Naive thymus-derived CD8-positive, alpha-beta T cell (primary cell): ENCODE measurements at regions of chr15 and their contacts with region 1.

Region 1: GRCh38 chr15:41544650-41545015 is 576 bp upstream of the RPAP1 start:
- DNase-seq: peak in 6 of 10 donors; percentile 23 to 69 (median 48)
- ATAC-seq: peak; percentile 18 to 44
- H3K4me3 Mint-ChIP-seq: peak overlapping the region; percentile 91 to 97 (median 95)
- H3K27ac Mint-ChIP-seq: peak overlapping the region; percentile 89 to 98 (median 95)
- H3K4me1 Mint-ChIP-seq: peaks cover 9 to 25% (median 16%) of the 10 kb centered on the region in 4 donors
- H3K27me3 Mint-ChIP-seq: no peaks in the 10 kb centered on the region

Region 2: GRCh38 chr15:41557673-41558399 is 13.2 kb after region 1 on chr15:
- POLR2A ChIA-PET with region 1: interaction called, 25 read pairs
- DNase-seq: peak; percentile 57 to 86 (median 74)
- ATAC-seq: peak; percentile 85 to 93
- H3K4me3 Mint-ChIP-seq: peak overlapping the region; percentile 83 to 97 (median 90)
- H3K27ac Mint-ChIP-seq: peak overlapping the region; percentile 48 to 95 (median 88)
- H3K4me1 Mint-ChIP-seq: peaks cover 16 to 22% (median 18%) of the 10 kb centered on the region in 4 donors
- H3K27me3 Mint-ChIP-seq: peaks cover 4 to 27% (median 15%) of the 10 kb centered on the region in 5 donors

Region 3: GRCh38 chr15:41634072-41634626 is 89.5 kb after region 1 on chr15:
- POLR2A ChIA-PET with region 1: no interaction called
- DNase-seq: no peak
- ATAC-seq: no peak
- H3K4me3 Mint-ChIP-seq: no peak overlapping the region
- H3K27ac Mint-ChIP-seq: peak overlapping the region in 2 of 10 donors; percentile 21 to 71
- H3K4me1 Mint-ChIP-seq: peaks cover 8 to 17% (median 15%) of the 10 kb centered on the region in 4 donors
- H3K27me3 Mint-ChIP-seq: no peaks in the 10 kb centered on the region

Region 4: GRCh38 chr15:41660235-41661077 is 115.8 kb after region 1 on chr15 and contains the start of gene MGA:
- POLR2A ChIA-PET with region 1: interaction called, 13 read pairs
- DNase-seq: peak; percentile 80 to 94 (median 88)
- ATAC-seq: peak; percentile 80 to 81
- H3K4me3 Mint-ChIP-seq: peak within 1 kb of the TSS; percentile 83 to 99 (median 90)
- H3K27ac Mint-ChIP-seq: peak within 1 kb of the TSS; percentile 89 to 99 (median 95)
- H3K4me1 Mint-ChIP-seq: peaks cover 18 to 59% (median 50%) of the 10 kb centered on the region in 4 donors
- H3K27me3 Mint-ChIP-seq: no peaks in the 10 kb centered on the region
- polyA plus RNA-seq, gene MGA: 12.2 to 20.6 (median 13.3) TPM